ENCODE measurements at regions of chr6 and their contacts with region 1.

Region 1: DNA sequence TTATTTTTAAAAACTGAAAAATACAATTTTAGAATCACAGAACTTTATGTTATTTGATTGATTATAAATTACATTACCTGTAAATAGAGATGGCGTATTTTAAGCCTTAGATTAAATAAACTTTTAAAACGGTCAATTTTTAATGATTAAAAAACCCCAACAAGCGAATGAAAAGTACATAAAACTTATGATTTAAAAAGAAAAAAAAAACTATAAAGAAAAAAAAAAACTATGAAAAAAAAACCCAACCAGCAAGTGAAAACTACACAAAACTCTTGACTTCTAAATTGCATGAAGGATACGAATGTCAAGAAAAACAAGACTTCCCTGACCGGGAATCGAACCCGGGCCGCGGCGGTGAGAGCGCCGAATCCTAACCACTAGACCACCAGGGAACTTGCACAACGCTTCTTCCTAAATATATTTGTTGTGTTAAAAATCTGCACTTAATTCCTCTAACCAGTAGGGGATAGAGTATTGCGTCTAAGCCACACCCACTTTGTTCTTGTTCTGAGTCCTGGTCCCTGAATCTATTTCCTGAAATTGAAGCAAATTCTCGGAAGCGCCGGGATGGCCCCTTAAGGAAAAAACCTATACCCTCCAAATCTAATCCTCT is 10.7 kb upstream of the NCOA7 start:
- DNase-seq: peak; percentile 92
- ATAC-seq: peak; percentile 86
- H3K4me3 ChIP-seq: peak overlapping the region; percentile 73
- H3K27ac ChIP-seq: peak overlapping the region; percentile 91
- H3K4me1 ChIP-seq: peaks cover 4% of the 10 kb centered on the region; the same call in 1 of the 2 replicates
- H3K27me3 ChIP-seq: no peaks in the 10 kb centered on the region
- CTCF ChIP-seq: peak in 1 of 3 experiments; percentile 20; a peak in 1 of 6 replicates
- EP300 ChIP-seq: peak in 1 of 2 experiments; percentile 84; a peak in 1 of 4 replicates
- POLR2A ChIP-seq: no peak
- RAD21 ChIP-seq: no peak

Region 2: GRCh38 chr6:125798734-125799508 is 18.9 kb after region 1 on chr6:
- CTCF ChIA-PET with region 1: interaction called, 120 read pairs
- POLR2A ChIA-PET with region 1: interaction called, 55 read pairs
- RAD21 ChIA-PET with region 1: interaction called, 26 read pairs
- SMC1A ChIA-PET with region 1: interaction called, 110 read pairs
- in situ Hi-C with region 1: no loop called
- intact Hi-C with region 1: no loop called
- DNase-seq: peak; percentile 72
- ATAC-seq: peak; percentile 81
- H3K4me3 ChIP-seq: no peak overlapping the region
- H3K27ac ChIP-seq: peak overlapping the region; percentile 96
- H3K4me1 ChIP-seq: peaks cover 51% of the 10 kb centered on the region
- H3K27me3 ChIP-seq: no peaks in the 10 kb centered on the region
- CTCF ChIP-seq: no peak
- EP300 ChIP-seq: peak; percentile 83 to 99
- POLR2A ChIP-seq: no peak
- RAD21 ChIP-seq: no peak

Region 3: GRCh38 chr6:125834348-125834747 is 54.3 kb after region 1 on chr6:
- CTCF ChIA-PET with region 1: interaction called, 5 read pairs
- POLR2A ChIA-PET with region 1: interaction called, 6 read pairs
- RAD21 ChIA-PET with region 1: interaction called, 18 read pairs
- SMC1A ChIA-PET with region 1: interaction called, 16 read pairs
- in situ Hi-C with region 1: no loop called
- intact Hi-C with region 1: no loop called
- DNase-seq: peak; percentile 36
- ATAC-seq: peak; percentile 82
- H3K4me3 ChIP-seq: no peak overlapping the region
- H3K27ac ChIP-seq: no peak overlapping the region
- H3K4me1 ChIP-seq: peaks cover 18% of the 10 kb centered on the region
- H3K27me3 ChIP-seq: no peaks in the 10 kb centered on the region
- CTCF ChIP-seq: no peak
- EP300 ChIP-seq: 0 out of 4 replicates have a peak, but pooled peaks of 1 of the 2 experiments have one; percentile 18
- POLR2A ChIP-seq: no peak
- RAD21 ChIP-seq: no peak

Region 4: GRCh38 chr6:125899726-125900182 is 119.7 kb after region 1 on chr6:
- CTCF ChIA-PET with region 1: interaction called, 29 read pairs
- POLR2A ChIA-PET with region 1: no interaction called
- RAD21 ChIA-PET with region 1: interaction called, 8 read pairs
- SMC1A ChIA-PET with region 1: interaction called, 14 read pairs
- in situ Hi-C with region 1: no loop called
- intact Hi-C with region 1: no loop called
- DNase-seq: no peak
- ATAC-seq: peak; percentile 39; the same call in 2 of the 3 replicates
- H3K4me3 ChIP-seq: no peak overlapping the region
- H3K27ac ChIP-seq: no peak overlapping the region
- H3K4me1 ChIP-seq: no peaks in the 10 kb centered on the region
- H3K27me3 ChIP-seq: no peaks in the 10 kb centered on the region
- CTCF ChIP-seq: no peak
- EP300 ChIP-seq: no peak
- POLR2A ChIP-seq: no peak
- RAD21 ChIP-seq: no peak

Region 5: DNA sequence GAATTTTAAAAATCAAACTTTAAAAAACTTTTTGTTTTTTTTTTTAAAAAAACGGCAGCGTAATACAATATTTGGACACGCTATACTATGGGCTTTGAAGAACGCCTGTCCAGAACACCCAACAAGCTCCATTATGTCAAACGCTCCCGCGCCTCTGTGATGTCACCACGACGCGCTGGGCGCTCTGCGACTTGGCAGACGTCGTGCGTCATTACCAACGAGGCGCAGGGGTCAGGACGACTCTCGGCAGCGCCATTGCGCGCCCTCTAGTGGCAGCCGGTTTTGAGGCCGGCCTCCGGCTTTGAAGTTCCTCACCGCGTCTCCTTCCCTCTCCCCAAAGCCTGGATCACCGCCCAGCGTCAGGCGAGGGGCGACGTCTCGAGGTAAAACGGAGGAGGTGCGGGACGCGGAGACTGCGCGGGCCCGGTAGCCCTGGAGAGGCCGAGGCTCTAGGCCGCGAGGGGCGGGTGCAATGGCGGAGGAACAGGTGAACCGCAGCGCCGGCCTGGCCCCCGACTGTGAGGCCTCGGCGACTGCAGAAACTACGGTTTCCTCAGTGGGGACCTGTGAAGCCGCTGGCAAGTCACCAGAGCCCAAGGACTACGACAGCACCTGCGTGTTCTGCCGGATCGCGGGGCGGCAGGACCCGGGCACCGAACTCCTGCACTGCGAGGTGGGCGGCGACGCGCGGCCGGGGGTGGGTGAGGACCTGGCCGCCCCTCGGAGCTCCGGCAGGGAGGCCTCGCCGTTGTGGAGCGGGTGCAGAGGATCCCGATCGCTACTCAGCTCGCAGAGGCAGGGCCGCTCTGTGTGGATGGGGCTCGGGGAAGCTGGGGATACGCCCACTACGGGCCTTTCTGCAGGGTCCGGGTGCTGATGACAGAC is 176.7 kb after region 1 on chr6 and contains the start of gene HINT3:
- CTCF ChIA-PET with region 1: interaction called, 505 read pairs
- POLR2A ChIA-PET with region 1: interaction called, 8 read pairs
- RAD21 ChIA-PET with region 1: interaction called, 74 read pairs
- SMC1A ChIA-PET with region 1: interaction called, 179 read pairs
- in situ Hi-C with region 1: loop called (anchors 5 kb)
- intact Hi-C with region 1: loop called (anchors 1 kb)
- DNase-seq: peak; percentile 83
- ATAC-seq: peak; percentile 85
- H3K4me3 ChIP-seq: peak within 1 kb of the TSS; percentile 82
- H3K27ac ChIP-seq: peak within 1 kb of the TSS; percentile 88
- H3K4me1 ChIP-seq: peaks cover 7% of the 10 kb centered on the region
- H3K27me3 ChIP-seq: no peaks in the 10 kb centered on the region
- CTCF ChIP-seq: peak; percentile 97 to 99 (median 98)
- EP300 ChIP-seq: 0 out of 4 replicates have a peak, but pooled peaks of 1 of the 2 experiments have one; percentile 27
- POLR2A ChIP-seq: peak; percentile 82
- RAD21 ChIP-seq: peak; percentile 76
- polyA plus RNA-seq, gene HINT3: 0.72 to 1.4 TPM

Region 6: GRCh38 chr6:125986300-125987025 is 206.4 kb after region 1 on chr6 and contains the start of gene TRMT11:
- CTCF ChIA-PET with region 1: interaction called, 20 read pairs
- POLR2A ChIA-PET with region 1: interaction called, 13 read pairs
- RAD21 ChIA-PET with region 1: interaction called, 10 read pairs
- SMC1A ChIA-PET with region 1: interaction called, 26 read pairs
- in situ Hi-C with region 1: no loop called
- intact Hi-C with region 1: loop called (anchors 5 kb)
- DNase-seq: peak; percentile 69
- ATAC-seq: peak; percentile 94
- H3K4me3 ChIP-seq: peak within 1 kb of the TSS; percentile 85
- H3K27ac ChIP-seq: peak within 1 kb of the TSS; percentile 95
- H3K4me1 ChIP-seq: peaks cover 5% of the 10 kb centered on the region; the same call in 1 of the 2 replicates
- H3K27me3 ChIP-seq: no peaks in the 10 kb centered on the region
- CTCF ChIP-seq: no peak
- EP300 ChIP-seq: 0 out of 4 replicates have a peak, but pooled peaks of 1 of the 2 experiments have one; percentile 34
- POLR2A ChIP-seq: peak; percentile 96
- RAD21 ChIP-seq: no peak
- polyA plus RNA-seq, gene TRMT11: 56.8 to 72.4 TPM

Region 7: GRCh38 chr6:126481319-126481718 is 701.3 kb after region 1 on chr6:
- CTCF ChIA-PET with region 1: no interaction called
- POLR2A ChIA-PET with region 1: no interaction called
- RAD21 ChIA-PET with region 1: no interaction called
- SMC1A ChIA-PET with region 1: no interaction called
- in situ Hi-C with region 1: no loop called
- intact Hi-C with region 1: no loop called
- DNase-seq: no peak
- ATAC-seq: no peak
- H3K4me3 ChIP-seq: no peak overlapping the region
- H3K27ac ChIP-seq: no peak overlapping the region
- H3K4me1 ChIP-seq: no peaks in the 10 kb centered on the region
- H3K27me3 ChIP-seq: no peaks in the 10 kb centered on the region
- CTCF ChIP-seq: no peak
- EP300 ChIP-seq: no peak
- POLR2A ChIP-seq: no peak
- RAD21 ChIP-seq: no peak

Measured in GM12878 (cell line).